Activated naive CD4-positive, alpha-beta T cell treated with anti-CD3 and anti-CD28 coated beads for 36 hours (primary cell): ENCODE measurements at regions of chr15 and their contacts with region 1.

Region 1: DNA sequence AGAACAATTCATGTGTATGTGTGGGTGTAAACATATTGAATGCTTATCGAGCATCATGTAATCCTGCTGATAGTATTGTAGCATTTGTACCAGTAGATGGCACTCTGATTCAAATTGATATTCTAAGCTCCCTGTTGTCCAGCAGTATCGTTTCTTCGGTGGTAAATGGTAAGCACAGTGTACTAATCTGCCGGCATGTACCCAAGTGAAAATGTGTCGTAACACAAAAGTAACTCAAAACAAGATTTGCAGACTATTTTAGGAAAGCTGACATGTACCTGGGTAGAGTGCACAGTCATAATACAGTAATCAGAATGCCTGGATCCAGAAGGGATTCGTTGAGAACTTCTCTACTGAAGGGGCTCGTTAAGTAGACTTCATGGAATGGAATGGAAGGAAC is 31.7 kb upstream of the MNS1 start:
- DNase-seq: no peak
- H3K4me3 Mint-ChIP-seq: no peak overlapping the region
- H3K27ac Mint-ChIP-seq: no peak overlapping the region
- H3K4me1 Mint-ChIP-seq: peaks cover 1% of the 10 kb centered on the region
- H3K27me3 Mint-ChIP-seq: peaks cover 15% of the 10 kb centered on the region

Region 2: DNA sequence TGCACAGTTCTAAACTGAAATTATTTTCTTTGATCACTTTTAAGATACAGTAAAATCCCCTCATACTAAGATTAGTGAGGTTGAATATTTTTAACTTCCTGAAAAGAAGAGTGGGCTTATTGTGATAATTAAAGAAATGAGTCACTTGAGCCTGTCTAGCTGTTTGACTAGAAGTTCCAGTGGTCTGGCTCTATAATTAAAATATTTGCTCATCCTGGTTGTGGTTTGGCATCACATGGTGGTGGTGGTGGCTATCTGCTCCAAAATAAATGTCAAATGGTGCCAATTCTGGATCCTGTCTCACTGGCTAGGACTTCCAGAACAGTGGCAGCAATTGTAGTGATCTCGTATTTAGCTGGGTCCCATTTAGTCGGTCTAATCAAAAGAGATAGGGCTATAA is 140.0 kb before region 1 on chr15:
- CTCF ChIA-PET with region 1: no interaction called
- intact Hi-C with region 1: no loop called
- DNase-seq: no peak
- H3K4me3 Mint-ChIP-seq: no peak overlapping the region
- H3K27ac Mint-ChIP-seq: no peak overlapping the region
- H3K4me1 Mint-ChIP-seq: no peaks in the 10 kb centered on the region
- H3K27me3 Mint-ChIP-seq: peaks cover 3% of the 10 kb centered on the region

Region 3: DNA sequence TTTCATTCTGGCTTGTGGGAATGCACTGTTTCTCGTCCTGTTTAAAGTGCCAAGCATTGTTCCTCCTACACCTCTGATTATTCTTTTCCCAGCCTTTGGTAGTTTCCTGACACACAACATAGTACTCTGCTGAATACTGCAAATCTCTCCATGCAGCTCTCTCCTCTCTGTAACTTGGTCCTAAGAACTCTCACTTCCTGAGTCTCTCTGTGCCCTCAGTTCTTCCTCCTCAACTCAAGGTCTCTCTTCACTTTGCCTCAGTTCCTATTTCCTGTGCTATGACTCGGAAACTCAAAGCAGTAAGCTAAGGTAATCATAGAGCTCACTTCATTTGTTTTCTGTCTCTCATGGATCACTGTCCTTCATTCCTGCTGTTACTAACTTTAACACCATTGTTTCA is 123.3 kb after region 1 on chr15:
- CTCF ChIA-PET with region 1: no interaction called
- intact Hi-C with region 1: no loop called
- DNase-seq: no peak
- H3K4me3 Mint-ChIP-seq: no peak overlapping the region
- H3K27ac Mint-ChIP-seq: no peak overlapping the region
- H3K4me1 Mint-ChIP-seq: no peaks in the 10 kb centered on the region
- H3K27me3 Mint-ChIP-seq: no peaks in the 10 kb centered on the region

Region 4: GRCh38 chr15:56653787-56654186 is 157.2 kb after region 1 on chr15:
- CTCF ChIA-PET with region 1: no interaction called
- intact Hi-C with region 1: no loop called
- DNase-seq: no peak
- H3K4me3 Mint-ChIP-seq: no peak overlapping the region
- H3K27ac Mint-ChIP-seq: no peak overlapping the region
- H3K4me1 Mint-ChIP-seq: no peaks in the 10 kb centered on the region
- H3K27me3 Mint-ChIP-seq: no peaks in the 10 kb centered on the region

Region 5: GRCh38 chr15:56821721-56822425 is 325.2 kb after region 1 on chr15:
- CTCF ChIA-PET with region 1: interaction called, 3 read pairs
- intact Hi-C with region 1: loop called (anchors 2 kb)
- DNase-seq: peak; percentile 61
- H3K4me3 Mint-ChIP-seq: no peak overlapping the region
- H3K27ac Mint-ChIP-seq: no peak overlapping the region
- H3K4me1 Mint-ChIP-seq: no peaks in the 10 kb centered on the region
- H3K27me3 Mint-ChIP-seq: no peaks in the 10 kb centered on the region

Region 6: GRCh38 chr15:56869573-56869972 is 372.9 kb after region 1 on chr15:
- CTCF ChIA-PET with region 1: interaction called, 95 read pairs
- intact Hi-C with region 1: loop called (anchors 1 kb)
- DNase-seq: peak; percentile 73
- H3K4me3 Mint-ChIP-seq: no peak overlapping the region
- H3K27ac Mint-ChIP-seq: no peak overlapping the region
- H3K4me1 Mint-ChIP-seq: no peaks in the 10 kb centered on the region
- H3K27me3 Mint-ChIP-seq: no peaks in the 10 kb centered on the region

Region 7: GRCh38 chr15:57213862-57214261 is 717.2 kb after region 1 on chr15:
- CTCF ChIA-PET with region 1: no interaction called
- intact Hi-C with region 1: loop called (anchors 1 kb)
- DNase-seq: no peak
- H3K4me3 Mint-ChIP-seq: no peak overlapping the region
- H3K27ac Mint-ChIP-seq: no peak overlapping the region
- H3K4me1 Mint-ChIP-seq: peaks cover 25% of the 10 kb centered on the region
- H3K27me3 Mint-ChIP-seq: no peaks in the 10 kb centered on the region